ENCODE measurements at regions of chr12 and their contacts with region 1.

Region 1: DNA sequence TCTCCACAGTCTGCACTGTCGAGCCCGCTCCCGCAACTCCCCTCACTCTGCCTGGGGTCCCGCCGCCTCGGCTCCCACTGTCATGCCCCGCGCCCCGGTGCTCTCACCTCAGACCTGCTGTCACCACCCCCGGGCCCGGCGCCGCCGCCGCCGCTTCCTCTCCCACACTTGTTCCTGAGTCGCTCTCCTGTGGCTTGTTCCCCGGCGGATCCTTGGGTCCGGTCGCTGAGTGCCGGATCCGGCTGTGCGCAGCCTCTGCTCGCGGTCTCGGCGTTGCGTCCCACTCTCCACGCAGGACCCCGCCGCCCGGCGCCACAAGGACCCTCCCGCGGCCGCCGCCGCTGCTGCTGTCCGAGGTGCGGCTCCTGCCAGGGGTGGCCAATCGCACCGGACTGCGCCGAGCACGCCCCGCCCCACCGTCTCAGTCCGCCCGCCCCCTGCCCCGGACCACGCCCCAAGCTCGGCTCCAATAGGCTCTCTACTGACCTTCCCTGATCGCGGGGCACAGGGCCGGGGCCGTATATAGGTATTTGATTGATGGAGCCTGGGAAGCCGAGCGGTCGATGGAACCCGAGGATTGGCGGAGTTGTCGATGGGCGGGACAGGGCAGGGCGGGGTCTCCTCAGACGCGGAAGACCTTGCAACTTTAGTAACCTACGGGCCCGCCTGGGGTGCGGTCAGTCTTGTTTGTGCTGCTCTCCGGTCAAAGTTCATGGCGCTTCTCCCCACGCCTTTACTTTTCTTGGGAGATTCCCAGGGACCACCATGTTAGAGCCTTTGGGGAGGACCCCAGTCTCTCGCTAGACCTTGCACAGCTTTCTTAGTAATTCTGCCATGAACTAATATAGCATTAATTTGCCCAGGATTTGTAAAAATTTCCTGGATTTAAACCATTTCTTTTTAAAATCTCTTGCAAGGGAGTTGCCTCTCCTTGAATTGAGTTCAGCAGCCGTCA is at the start of gene TAOK3:
- DNase-seq: peak; percentile 98 to 100
- H3K4me3 ChIP-seq: peak within 1 kb of the TSS; percentile 74 to 96
- H3K27ac ChIP-seq: peak within 1 kb of the TSS; percentile 73 to 95
- H3K4me1 ChIP-seq: peaks cover 2 to 17% of the 10 kb centered on the region in 2 donors
- H3K27me3 ChIP-seq: no peaks in the 10 kb centered on the region
- CTCF ChIP-seq: no peak
- total RNA-seq, gene TAOK3: 39.3 TPM

Region 2: DNA sequence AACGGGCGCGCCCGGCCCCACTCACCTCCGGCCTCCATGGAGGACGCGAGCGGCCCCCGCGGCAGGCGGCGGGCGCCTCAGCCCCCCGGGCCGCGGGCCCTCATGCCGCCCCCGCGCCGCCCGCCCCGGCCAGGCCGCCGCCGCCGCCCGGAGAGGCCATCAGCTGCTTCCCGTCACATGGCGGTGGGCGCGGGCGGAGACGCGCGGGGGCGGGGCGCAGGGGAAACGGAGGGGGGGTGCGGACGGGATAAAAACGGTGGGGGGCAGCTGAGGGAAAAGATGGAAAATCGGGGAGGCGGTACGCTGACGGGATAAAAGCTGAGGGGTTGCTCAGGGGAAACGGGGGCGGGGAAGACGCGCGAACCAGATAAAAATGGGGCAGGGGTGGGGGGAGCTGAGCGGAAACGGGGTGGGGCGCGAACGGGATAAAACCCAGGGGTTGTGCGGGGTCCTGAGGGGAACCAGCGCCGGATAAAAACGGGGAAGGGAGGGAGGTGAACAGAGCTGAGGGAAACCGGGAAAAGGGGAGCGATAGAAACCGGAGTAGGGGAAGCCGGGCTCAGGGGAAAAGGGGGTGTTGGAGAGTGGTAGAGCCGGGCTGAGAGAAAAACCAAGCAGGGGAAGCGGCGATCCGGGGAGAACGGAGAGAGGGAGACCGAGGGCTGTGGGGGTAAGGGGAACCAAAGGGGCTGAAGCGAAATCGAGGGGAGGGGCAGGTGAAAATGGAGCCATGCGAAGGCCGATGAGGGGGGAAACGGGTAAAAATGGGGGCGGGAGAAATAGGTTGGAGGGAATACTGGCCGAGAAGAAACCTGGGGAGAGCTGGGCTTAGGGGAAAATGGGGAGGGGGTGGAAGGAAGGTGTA is 311.6 kb before region 1 on chr12 and contains the start of gene WSB2:
- intact Hi-C with region 1: loop called (anchors 2 kb)
- DNase-seq: peak in 1 of 2 donors; percentile 88
- H3K4me3 ChIP-seq: peak within 1 kb of the TSS; percentile 75 to 86
- H3K27ac ChIP-seq: peak within 1 kb of the TSS; percentile 95 to 99
- H3K4me1 ChIP-seq: peaks cover 0 to 8% of the 10 kb centered on the region in 2 donors
- H3K27me3 ChIP-seq: no peaks in the 10 kb centered on the region
- CTCF ChIP-seq: no peak
- total RNA-seq, gene WSB2: 68.6 TPM

Region 3: GRCh38 chr12:118135788-118136558 is 236.8 kb before region 1 on chr12 and contains the start of gene PEBP1:
- intact Hi-C with region 1: loop called (anchors 1 kb)
- DNase-seq: peak; percentile 75 to 97
- H3K4me3 ChIP-seq: peak within 1 kb of the TSS; percentile 74 to 82
- H3K27ac ChIP-seq: peak within 1 kb of the TSS; percentile 84 to 86
- H3K4me1 ChIP-seq: peaks cover 0 to 20% of the 10 kb centered on the region in 2 donors
- H3K27me3 ChIP-seq: no peaks in the 10 kb centered on the region
- CTCF ChIP-seq: no peak
- total RNA-seq, gene PEBP1: 312 TPM

Region 4: GRCh38 chr12:118307069-118307954 is 65.5 kb before region 1 on chr12:
- intact Hi-C with region 1: loop called (anchors 1 kb)
- DNase-seq: peak in 1 of 2 donors; percentile 73
- H3K4me3 ChIP-seq: peak overlapping the region; percentile 37 to 46
- H3K27ac ChIP-seq: peak overlapping the region; percentile 70 to 84
- H3K4me1 ChIP-seq: peaks cover 5% of the 10 kb centered on the region in 2 donors
- H3K27me3 ChIP-seq: no peaks in the 10 kb centered on the region
- CTCF ChIP-seq: no peak

Region 5: GRCh38 chr12:119667577-119668323 is 1294.9 kb after region 1 on chr12 and contains the start of gene PRKAB1:
- intact Hi-C with region 1: loop called (anchors 5 kb)
- DNase-seq: peak; percentile 83 to 97
- H3K4me3 ChIP-seq: peak within 1 kb of the TSS; percentile 81 to 90
- H3K27ac ChIP-seq: peak within 1 kb of the TSS; percentile 93 to 97
- H3K4me1 ChIP-seq: peaks cover 0 to 22% of the 10 kb centered on the region in 2 donors
- H3K27me3 ChIP-seq: no peaks in the 10 kb centered on the region
- CTCF ChIP-seq: peak; percentile 86 to 96 (median 88)
- total RNA-seq, gene PRKAB1: 41.2 TPM